MCF 10A (cell line): ENCODE measurements at regions of chr1 and their contacts with region 1.

Region 1: DNA sequence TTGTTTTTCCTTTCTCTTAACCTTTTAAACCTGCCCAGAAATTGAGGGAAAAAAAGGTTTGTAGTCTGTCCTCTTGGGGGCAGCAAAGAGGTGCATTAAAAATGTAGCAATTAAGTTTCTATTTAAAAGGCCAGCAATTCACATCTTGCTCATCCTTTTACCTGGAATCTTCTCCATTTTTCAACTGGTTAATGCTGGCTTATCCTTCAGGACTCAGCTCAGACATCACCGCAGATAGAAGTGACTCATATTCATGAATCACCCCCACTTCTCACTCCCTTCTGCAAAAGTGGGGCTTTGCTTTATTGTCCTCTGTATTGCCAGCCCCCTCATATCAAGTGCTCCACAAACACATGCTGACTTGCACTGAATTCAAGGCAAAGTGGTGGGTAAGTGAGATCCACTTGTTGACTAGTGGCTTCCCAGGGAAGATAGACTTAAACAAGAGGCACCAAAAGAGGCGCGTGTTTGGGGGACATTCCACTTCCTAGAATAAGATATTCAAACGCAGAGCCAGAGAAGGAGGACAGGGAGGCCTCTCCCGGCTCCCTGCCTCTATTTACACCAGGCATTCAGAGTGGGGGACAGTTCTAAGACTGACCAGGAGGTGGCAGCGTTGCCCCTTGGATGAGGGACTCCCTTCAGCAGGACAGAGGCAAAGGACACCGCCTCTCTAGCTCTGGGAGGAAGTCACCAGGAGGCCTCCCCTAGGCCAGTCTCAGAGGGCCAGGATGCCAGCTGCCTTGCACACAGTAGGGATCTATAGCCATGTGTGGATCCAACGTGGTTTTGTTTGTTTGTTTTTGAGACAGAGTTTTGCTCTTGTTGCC is 23.2 kb upstream of the ZNF648 start:
- DNase-seq: peak; percentile 91
- H3K4me3 Mint-ChIP-seq: no peak overlapping the region
- H3K27ac Mint-ChIP-seq: no peak overlapping the region
- H3K4me1 Mint-ChIP-seq: peaks cover 27% of the 10 kb centered on the region
- H3K27me3 Mint-ChIP-seq: no peaks in the 10 kb centered on the region
- CTCF ChIP-seq: peak; percentile 98

Region 2: GRCh38 chr1:181685216-181685615 is 399.5 kb before region 1 on chr1:
- CTCF ChIA-PET with region 1: no interaction called
- POLR2A ChIA-PET with region 1: no interaction called
- intact Hi-C with region 1: no loop called
- DNase-seq: no peak
- H3K4me3 Mint-ChIP-seq: no peak overlapping the region
- H3K27ac Mint-ChIP-seq: no peak overlapping the region
- H3K4me1 Mint-ChIP-seq: no peaks in the 10 kb centered on the region
- H3K27me3 Mint-ChIP-seq: peaks cover 39% of the 10 kb centered on the region
- CTCF ChIP-seq: no peak

Region 3: GRCh38 chr1:181784039-181784683 is 300.5 kb before region 1 on chr1:
- CTCF ChIA-PET with region 1: no interaction called
- POLR2A ChIA-PET with region 1: no interaction called
- intact Hi-C with region 1: no loop called
- DNase-seq: peak; percentile 81
- H3K4me3 Mint-ChIP-seq: no peak overlapping the region
- H3K27ac Mint-ChIP-seq: no peak overlapping the region
- H3K4me1 Mint-ChIP-seq: no peaks in the 10 kb centered on the region
- H3K27me3 Mint-ChIP-seq: no peaks in the 10 kb centered on the region
- CTCF ChIP-seq: no peak

Region 4: DNA sequence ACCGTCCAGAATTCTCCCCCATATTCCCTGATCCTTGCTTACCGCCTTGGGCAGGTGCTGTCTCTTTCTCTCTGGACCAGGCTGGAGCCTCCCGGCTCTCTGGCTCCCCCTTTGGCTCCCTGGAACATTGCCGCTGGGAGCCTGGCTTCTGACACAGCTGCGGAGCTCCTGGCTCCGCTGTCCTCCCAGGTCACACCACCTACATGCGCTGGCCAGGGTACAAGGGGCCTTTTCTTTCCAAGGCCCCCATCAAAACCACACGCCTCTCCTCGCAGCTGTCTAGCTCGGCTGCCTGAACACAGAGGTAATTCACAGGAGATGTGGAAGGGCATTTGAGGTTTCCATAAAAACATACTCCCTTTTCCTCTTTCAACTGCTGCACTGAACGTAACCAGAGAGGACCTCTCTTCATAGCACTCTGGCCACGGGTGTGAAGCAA is 15.7 kb before region 1 on chr1:
- CTCF ChIA-PET with region 1: interaction called, 88 read pairs
- POLR2A ChIA-PET with region 1: interaction called, 4 read pairs
- intact Hi-C with region 1: no loop called
- DNase-seq: peak; percentile 81
- H3K4me3 Mint-ChIP-seq: no peak overlapping the region
- H3K27ac Mint-ChIP-seq: no peak overlapping the region
- H3K4me1 Mint-ChIP-seq: no peaks in the 10 kb centered on the region
- H3K27me3 Mint-ChIP-seq: no peaks in the 10 kb centered on the region
- CTCF ChIP-seq: peak; percentile 94

Region 5: DNA sequence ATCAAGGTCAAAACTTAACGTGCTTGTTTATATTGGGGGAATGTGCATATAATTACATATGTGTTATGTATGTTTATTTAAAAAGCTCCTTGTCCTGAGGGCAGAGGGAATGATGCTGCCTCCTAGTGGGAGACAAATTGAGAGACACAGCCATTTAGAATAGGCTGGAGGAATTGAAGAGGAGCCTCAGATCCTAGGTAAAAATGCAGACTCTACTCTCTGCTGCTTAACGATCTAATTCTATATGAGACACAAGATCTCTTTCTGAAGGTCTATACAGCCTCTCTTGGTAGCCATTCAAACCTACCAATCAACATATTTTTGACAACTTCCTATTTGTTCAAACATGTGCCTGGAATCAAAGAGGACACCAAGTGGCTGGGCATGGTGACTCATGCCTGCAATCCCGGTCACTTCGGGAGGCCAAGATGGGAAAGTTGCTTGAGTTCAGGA is 113.4 kb after region 1 on chr1:
- CTCF ChIA-PET with region 1: interaction called, 16 read pairs
- POLR2A ChIA-PET with region 1: interaction called, 25 read pairs
- intact Hi-C with region 1: loop called (anchors 1 kb)
- DNase-seq: peak; percentile 62
- H3K4me3 Mint-ChIP-seq: peak overlapping the region; percentile 15
- H3K27ac Mint-ChIP-seq: peak overlapping the region; percentile 94
- H3K4me1 Mint-ChIP-seq: peaks cover 56% of the 10 kb centered on the region
- H3K27me3 Mint-ChIP-seq: no peaks in the 10 kb centered on the region
- CTCF ChIP-seq: peak; percentile 20

Region 6: DNA sequence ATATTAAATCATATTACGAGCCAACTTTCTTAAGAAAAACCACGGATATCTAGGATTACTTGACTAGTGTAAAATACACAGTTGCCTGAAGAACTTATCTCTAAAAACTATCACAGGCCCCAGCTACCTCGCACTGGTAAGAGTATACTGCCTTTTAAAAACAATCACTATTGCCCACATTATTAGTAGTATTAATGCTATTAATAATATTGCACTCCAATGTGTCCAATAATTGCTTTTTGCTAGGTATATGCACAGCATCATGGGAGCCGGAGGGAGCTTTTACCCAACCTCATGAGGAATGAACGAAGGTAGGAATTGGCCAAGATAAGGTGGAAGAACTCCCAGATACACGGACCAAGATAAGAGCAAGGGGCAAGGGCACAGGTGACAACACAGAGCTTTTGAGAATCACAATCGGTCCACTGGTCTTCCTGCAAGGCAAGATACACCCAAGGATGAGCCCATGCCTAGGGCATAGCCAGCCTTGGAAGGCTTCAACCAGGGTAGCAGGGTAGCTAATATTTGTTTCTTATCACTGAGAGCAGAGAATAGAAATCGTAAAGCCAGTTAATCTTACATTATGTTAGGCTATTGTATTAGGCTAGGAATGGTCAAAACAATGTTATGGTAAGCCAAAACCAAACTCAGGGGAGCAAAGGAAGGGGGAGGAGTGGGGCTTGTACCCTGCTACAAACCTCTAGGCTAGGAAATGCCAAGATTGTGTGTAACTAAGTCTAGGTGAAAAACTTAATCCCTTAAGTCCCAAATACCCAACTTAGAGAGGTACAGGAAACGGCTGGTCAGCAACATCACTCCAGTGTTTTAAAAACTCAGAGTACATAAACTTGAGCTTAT is 297.5 kb after region 1 on chr1:
- CTCF ChIA-PET with region 1: interaction called, 20 read pairs
- POLR2A ChIA-PET with region 1: interaction called, 43 read pairs
- intact Hi-C with region 1: no loop called
- DNase-seq: no peak
- H3K4me3 Mint-ChIP-seq: no peak overlapping the region
- H3K27ac Mint-ChIP-seq: peak overlapping the region; percentile 78
- H3K4me1 Mint-ChIP-seq: peaks cover 39% of the 10 kb centered on the region
- H3K27me3 Mint-ChIP-seq: no peaks in the 10 kb centered on the region
- CTCF ChIP-seq: no peak

Region 7: GRCh38 chr1:182446033-182446669 is 361.4 kb after region 1 on chr1:
- CTCF ChIA-PET with region 1: interaction called, 4 read pairs
- POLR2A ChIA-PET with region 1: no interaction called
- intact Hi-C with region 1: loop called (anchors 1 kb)
- DNase-seq: peak; percentile 81
- H3K4me3 Mint-ChIP-seq: no peak overlapping the region
- H3K27ac Mint-ChIP-seq: no peak overlapping the region
- H3K4me1 Mint-ChIP-seq: peaks cover 6% of the 10 kb centered on the region
- H3K27me3 Mint-ChIP-seq: no peaks in the 10 kb centered on the region
- CTCF ChIP-seq: peak; percentile 89